Pancreas (tissue), 10 donors: ENCODE measurements at regions of chr20 and their contacts with region 1.

Region 1: GRCh38 chr20:24584538-24585356 is 115.3 kb downstream of the SYNDIG1 start:
- DNase-seq: no peak
- ATAC-seq: no peak
- H3K4me3 ChIP-seq: no peak overlapping the region
- H3K27ac ChIP-seq: no peak overlapping the region
- H3K4me1 ChIP-seq: no peaks in the 10 kb centered on the region
- H3K27me3 ChIP-seq: no peaks in the 10 kb centered on the region
- CTCF ChIP-seq: no peak

Region 2: GRCh38 chr20:24648481-24648880 is 63.7 kb after region 1 on chr20:
- intact Hi-C with region 1: loop called in 1 of 3 experiments (anchors 10 kb)
- DNase-seq: no peak
- ATAC-seq: no peak
- H3K4me3 ChIP-seq: no peak overlapping the region
- H3K27ac ChIP-seq: no peak overlapping the region
- H3K4me1 ChIP-seq: no peaks in the 10 kb centered on the region
- H3K27me3 ChIP-seq: no peaks in the 10 kb centered on the region
- CTCF ChIP-seq: no peak

Region 3: GRCh38 chr20:24763386-24764026 is 178.8 kb after region 1 on chr20:
- intact Hi-C with region 1: no loop called
- DNase-seq: peak in 2 of 6 donors; percentile 1 to 7
- ATAC-seq: no peak
- H3K4me3 ChIP-seq: no peak overlapping the region
- H3K27ac ChIP-seq: no peak overlapping the region
- H3K4me1 ChIP-seq: peaks cover 0 to 8% (median 0%) of the 10 kb centered on the region in 3 donors
- H3K27me3 ChIP-seq: no peaks in the 10 kb centered on the region
- CTCF ChIP-seq: no peak